AG04449 (cell line): ENCODE measurements at regions of chr20 and their contacts with region 1.

Region 1: DNA sequence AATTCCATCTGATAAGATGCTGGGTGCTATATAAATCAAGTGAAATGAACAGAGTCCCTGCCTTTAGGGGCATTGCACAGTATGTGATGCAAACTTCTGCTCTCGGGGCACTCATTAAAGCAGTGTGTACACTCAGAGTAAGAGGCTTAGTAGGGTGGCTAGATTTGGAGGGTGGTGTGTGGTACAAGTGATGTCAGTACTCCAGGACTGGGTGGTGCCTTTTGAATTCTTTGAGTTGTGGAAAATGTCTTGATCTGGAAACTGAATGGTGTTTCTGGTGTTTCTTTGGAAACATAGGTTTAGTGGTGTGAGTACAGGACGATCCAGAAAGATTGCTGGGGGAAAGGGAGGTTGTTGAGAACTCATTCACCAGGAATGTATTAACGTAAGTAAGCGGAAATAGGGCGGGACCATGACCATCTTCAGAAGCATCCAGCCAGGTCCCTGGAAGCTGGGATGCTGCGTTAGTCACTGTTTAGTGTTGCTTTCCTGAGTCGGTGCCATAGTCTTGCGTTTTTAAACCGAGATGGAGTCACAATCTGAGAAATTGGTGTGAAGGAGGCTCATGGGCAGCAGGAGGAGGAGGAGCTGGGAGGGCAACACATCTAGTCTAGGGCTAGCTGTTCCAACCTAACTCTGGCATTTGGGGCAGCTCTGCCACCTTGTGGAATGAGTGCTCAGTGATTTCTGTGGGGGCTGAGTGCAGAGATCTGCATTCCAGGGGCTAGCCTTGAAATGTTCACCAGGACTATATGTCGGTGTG is 70.3 kb downstream of the SCAND1 start:
- DNase-seq: peak; percentile 99
- H3K4me3 ChIP-seq: peak overlapping the region; percentile 38
- CTCF ChIP-seq: peak; percentile 67

Region 2: GRCh38 chr20:35523298-35523888 is 360.6 kb before region 1 on chr20:
- CTCF ChIA-PET with region 1: no interaction called
- POLR2A ChIA-PET with region 1: no interaction called
- DNase-seq: no peak
- H3K4me3 ChIP-seq: no peak overlapping the region
- CTCF ChIP-seq: peak; percentile 57

Region 3: GRCh38 chr20:35729836-35730582 is 153.9 kb before region 1 on chr20:
- CTCF ChIA-PET with region 1: interaction called, 12 read pairs
- POLR2A ChIA-PET with region 1: interaction called, 5 read pairs
- DNase-seq: no peak
- H3K4me3 ChIP-seq: no peak overlapping the region
- CTCF ChIP-seq: no peak

Region 4: DNA sequence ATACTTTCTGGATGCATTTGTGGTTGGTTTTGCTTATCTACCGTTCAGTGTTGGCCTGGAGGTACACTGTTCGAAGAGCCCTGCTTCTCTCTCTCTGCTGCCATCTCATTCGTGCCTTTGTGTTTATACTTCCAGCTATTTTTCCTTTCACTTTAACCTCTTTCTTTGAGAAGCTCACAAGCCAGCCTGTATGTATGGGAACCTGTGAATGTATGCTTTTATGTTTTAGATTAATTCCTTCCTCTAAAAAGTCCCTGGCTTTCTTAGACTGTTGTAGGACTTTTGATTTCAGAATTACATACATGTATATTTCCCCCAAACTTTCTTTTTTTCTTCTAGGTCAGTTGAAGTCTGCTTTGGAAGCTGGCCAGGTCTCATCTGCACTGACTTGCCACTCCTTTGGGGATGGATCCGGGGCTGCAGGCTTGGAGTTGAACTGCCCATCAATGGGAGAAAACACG is 12.6 kb before region 1 on chr20:
- CTCF ChIA-PET with region 1: interaction called, 4 read pairs
- POLR2A ChIA-PET with region 1: interaction called, 17 read pairs
- DNase-seq: no peak
- H3K4me3 ChIP-seq: no peak overlapping the region
- CTCF ChIP-seq: no peak

Region 5: GRCh38 chr20:36666181-36666740 is 782.3 kb after region 1 on chr20:
- CTCF ChIA-PET with region 1: no interaction called
- POLR2A ChIA-PET with region 1: no interaction called
- DNase-seq: peak; percentile 16
- H3K4me3 ChIP-seq: no peak overlapping the region
- CTCF ChIP-seq: no peak